ENCODE measurements at regions of chr3 and their contacts with region 1.

Region 1: GRCh38 chr3:129026728-129027543 is 25.8 kb downstream of the EFCC1 start:
- DNase-seq: peak; percentile 93
- H3K4me3 Mint-ChIP-seq: peak overlapping the region; percentile 80
- H3K27ac Mint-ChIP-seq: peak overlapping the region; percentile 87
- H3K4me1 Mint-ChIP-seq: peaks cover 24% of the 10 kb centered on the region
- H3K27me3 Mint-ChIP-seq: peaks cover 13% of the 10 kb centered on the region

Region 2: GRCh38 chr3:128969993-128970739 is 56.8 kb before region 1 on chr3:
- intact Hi-C with region 1: loop called (anchors 1 kb)
- DNase-seq: peak; percentile 52
- H3K4me3 Mint-ChIP-seq: no peak overlapping the region
- H3K27ac Mint-ChIP-seq: no peak overlapping the region
- H3K4me1 Mint-ChIP-seq: peaks cover 10% of the 10 kb centered on the region
- H3K27me3 Mint-ChIP-seq: peaks cover 9% of the 10 kb centered on the region

Region 3: GRCh38 chr3:129045675-129046036 is 18.7 kb after region 1 on chr3:
- intact Hi-C with region 1: loop called (anchors 2 kb)
- DNase-seq: peak; percentile 26
- H3K4me3 Mint-ChIP-seq: no peak overlapping the region
- H3K27ac Mint-ChIP-seq: no peak overlapping the region
- H3K4me1 Mint-ChIP-seq: peaks cover 4% of the 10 kb centered on the region
- H3K27me3 Mint-ChIP-seq: peaks cover 27% of the 10 kb centered on the region